ENCODE measurements at regions of chrX and their contacts with region 1.

Region 1: DNA sequence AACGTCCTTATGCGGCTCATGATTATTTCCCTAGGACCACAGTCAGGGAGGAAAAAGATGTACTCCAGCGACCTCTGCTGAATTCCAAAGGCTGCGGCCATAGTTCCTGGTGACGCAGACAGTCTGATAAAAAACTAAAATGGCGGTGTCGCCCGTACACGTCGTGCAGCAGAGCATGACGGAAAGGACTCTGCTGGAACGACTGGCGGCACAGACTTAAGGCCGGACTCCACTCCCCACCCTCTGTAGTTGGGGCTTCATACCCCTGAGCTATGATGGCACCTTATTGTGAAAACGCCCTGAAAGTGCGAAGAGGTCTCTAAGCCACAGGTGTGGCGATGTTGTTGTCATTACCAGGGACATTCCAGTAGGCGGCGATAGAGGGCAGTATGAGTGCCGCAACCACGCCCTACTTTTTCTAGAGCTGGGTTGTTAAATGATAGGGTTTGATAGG is 90.0 kb upstream of the EDA2R start:
- DNase-seq: peak; percentile 69
- H3K4me3 Mint-ChIP-seq: peak overlapping the region; percentile 84
- H3K27ac Mint-ChIP-seq: peak overlapping the region; percentile 89
- H3K4me1 Mint-ChIP-seq: no peaks in the 10 kb centered on the region
- H3K27me3 Mint-ChIP-seq: no peaks in the 10 kb centered on the region
- CTCF ChIP-seq: peak; percentile 47

Region 2: GRCh38 chrX:65581661-65582339 is 1147.0 kb before region 1 on chrX:
- CTCF ChIA-PET with region 1: interaction called, 33 read pairs
- POLR2A ChIA-PET with region 1: no interaction called
- intact Hi-C with region 1: loop called (anchors 1 kb)
- DNase-seq: peak; percentile 72
- H3K4me3 Mint-ChIP-seq: no peak overlapping the region
- H3K27ac Mint-ChIP-seq: no peak overlapping the region
- H3K4me1 Mint-ChIP-seq: peaks cover 5% of the 10 kb centered on the region
- H3K27me3 Mint-ChIP-seq: no peaks in the 10 kb centered on the region
- CTCF ChIP-seq: peak; percentile 60

Region 3: GRCh38 chrX:65985922-65986588 is 742.8 kb before region 1 on chrX:
- CTCF ChIA-PET with region 1: interaction called, 4 read pairs
- POLR2A ChIA-PET with region 1: no interaction called
- intact Hi-C with region 1: loop called (anchors 5 kb)
- DNase-seq: peak; percentile 70
- H3K4me3 Mint-ChIP-seq: no peak overlapping the region
- H3K27ac Mint-ChIP-seq: no peak overlapping the region
- H3K4me1 Mint-ChIP-seq: peaks cover 6% of the 10 kb centered on the region
- H3K27me3 Mint-ChIP-seq: no peaks in the 10 kb centered on the region
- CTCF ChIP-seq: peak; percentile 44

Region 4: DNA sequence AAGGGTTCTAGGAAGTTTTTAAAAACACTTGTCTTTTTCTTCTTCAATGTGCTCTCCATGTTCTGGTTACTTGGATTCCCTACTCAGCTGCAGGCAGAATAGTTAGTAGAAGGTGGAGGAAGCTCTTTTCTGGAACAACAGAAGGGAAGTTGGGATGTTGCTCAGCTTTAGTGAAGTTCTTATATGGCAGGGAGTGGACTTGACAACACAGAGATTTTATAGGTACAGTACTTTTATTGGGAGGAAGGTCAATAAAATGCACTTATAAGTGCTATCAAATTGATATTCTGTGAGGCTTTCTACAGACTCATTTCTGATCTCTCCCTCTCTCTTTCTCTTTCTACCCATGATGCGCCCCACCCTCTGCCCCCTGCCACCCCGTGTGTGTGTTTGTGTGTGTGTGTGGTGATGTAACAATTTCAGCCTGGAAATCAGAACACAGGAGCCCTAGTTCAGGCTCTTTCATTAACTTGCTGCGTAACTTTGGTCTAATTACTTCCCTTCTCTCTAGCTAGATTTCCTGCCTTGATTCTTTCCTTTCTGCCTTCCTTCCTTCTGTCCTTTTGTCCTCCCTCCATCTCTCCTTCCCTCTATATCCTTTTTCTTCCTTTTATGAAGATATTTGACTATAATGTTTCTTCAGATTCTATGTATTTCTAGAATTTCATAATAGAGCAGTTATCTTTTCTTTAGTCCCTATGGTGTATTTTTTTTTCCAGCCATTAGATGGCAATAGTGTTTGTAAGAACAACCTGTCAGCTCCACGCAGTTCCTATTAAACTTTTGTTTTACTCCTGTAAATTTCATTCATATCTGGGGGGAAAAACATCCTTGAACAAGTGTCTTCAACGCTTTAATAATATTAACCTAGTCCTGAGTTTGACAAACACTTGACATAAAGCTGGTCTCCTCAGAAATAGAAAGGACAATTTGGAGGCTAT is 527.7 kb before region 1 on chrX:
- CTCF ChIA-PET with region 1: interaction called, 143 read pairs
- POLR2A ChIA-PET with region 1: interaction called, 3 read pairs
- intact Hi-C with region 1: loop called (anchors 1 kb)
- DNase-seq: peak; percentile 18
- H3K4me3 Mint-ChIP-seq: no peak overlapping the region
- H3K27ac Mint-ChIP-seq: no peak overlapping the region
- H3K4me1 Mint-ChIP-seq: no peaks in the 10 kb centered on the region
- H3K27me3 Mint-ChIP-seq: no peaks in the 10 kb centered on the region
- CTCF ChIP-seq: peak; percentile 34

Region 5: DNA sequence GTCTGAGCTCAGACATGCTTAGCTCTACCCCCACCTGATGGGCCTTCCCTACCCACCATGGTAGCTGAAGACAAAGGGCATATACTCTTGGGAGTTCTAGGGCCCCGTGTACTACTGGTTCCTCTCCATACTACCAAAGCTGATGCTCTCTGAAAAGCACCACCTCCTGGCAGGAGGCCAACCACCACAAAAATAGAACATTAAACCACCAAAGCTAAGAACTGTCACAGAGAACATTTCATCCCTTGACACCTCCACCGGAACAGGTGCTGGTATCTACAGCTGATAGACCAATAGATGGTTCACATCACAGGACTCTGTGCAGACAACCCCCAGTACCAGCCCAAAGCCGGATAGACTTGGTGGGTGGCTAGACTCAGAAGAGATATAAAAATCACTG is 103.3 kb before region 1 on chrX:
- CTCF ChIA-PET with region 1: no interaction called
- POLR2A ChIA-PET with region 1: no interaction called
- intact Hi-C with region 1: no loop called
- DNase-seq: no peak
- H3K4me3 Mint-ChIP-seq: no peak overlapping the region
- H3K27ac Mint-ChIP-seq: no peak overlapping the region
- H3K4me1 Mint-ChIP-seq: peaks cover 31% of the 10 kb centered on the region
- H3K27me3 Mint-ChIP-seq: no peaks in the 10 kb centered on the region
- CTCF ChIP-seq: no peak

Region 6: DNA sequence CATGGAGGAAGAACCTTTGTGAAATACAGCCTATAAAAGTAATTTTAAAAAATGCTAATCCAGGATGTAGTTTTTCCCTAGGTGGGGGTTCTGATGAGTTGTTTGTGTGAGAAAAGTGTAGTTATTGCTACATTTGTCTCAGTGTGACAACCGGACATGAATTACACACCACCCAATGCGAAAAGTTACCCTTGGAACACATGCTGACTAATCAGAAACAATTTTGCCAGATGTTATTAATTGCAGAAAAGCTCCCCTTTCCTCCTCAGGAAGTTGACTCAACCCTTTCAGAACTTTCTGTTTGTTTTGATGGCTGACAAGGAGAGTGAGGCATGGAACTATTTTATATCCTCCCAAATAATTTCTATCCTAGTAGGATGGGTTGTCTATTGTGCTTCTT is 51.9 kb before region 1 on chrX:
- CTCF ChIA-PET with region 1: interaction called, 9 read pairs
- POLR2A ChIA-PET with region 1: no interaction called
- intact Hi-C with region 1: loop called (anchors 2 kb)
- DNase-seq: peak; percentile 82
- H3K4me3 Mint-ChIP-seq: peak overlapping the region; percentile 19
- H3K27ac Mint-ChIP-seq: peak overlapping the region; percentile 60
- H3K4me1 Mint-ChIP-seq: peaks cover 16% of the 10 kb centered on the region
- H3K27me3 Mint-ChIP-seq: no peaks in the 10 kb centered on the region
- CTCF ChIP-seq: no peak

Region 7: GRCh38 chrX:66931713-66932112 is 202.9 kb after region 1 on chrX:
- CTCF ChIA-PET with region 1: no interaction called
- POLR2A ChIA-PET with region 1: no interaction called
- intact Hi-C with region 1: no loop called
- DNase-seq: no peak
- H3K4me3 Mint-ChIP-seq: no peak overlapping the region
- H3K27ac Mint-ChIP-seq: no peak overlapping the region
- H3K4me1 Mint-ChIP-seq: no peaks in the 10 kb centered on the region
- H3K27me3 Mint-ChIP-seq: no peaks in the 10 kb centered on the region
- CTCF ChIP-seq: no peak

Region 8: GRCh38 chrX:66988331-66988730 is 259.5 kb after region 1 on chrX:
- CTCF ChIA-PET with region 1: no interaction called
- POLR2A ChIA-PET with region 1: no interaction called
- intact Hi-C with region 1: no loop called
- DNase-seq: no peak
- H3K4me3 Mint-ChIP-seq: no peak overlapping the region
- H3K27ac Mint-ChIP-seq: no peak overlapping the region
- H3K4me1 Mint-ChIP-seq: no peaks in the 10 kb centered on the region
- H3K27me3 Mint-ChIP-seq: no peaks in the 10 kb centered on the region
- CTCF ChIP-seq: no peak

Region 9: GRCh38 chrX:67004451-67004850 is 275.6 kb after region 1 on chrX:
- CTCF ChIA-PET with region 1: no interaction called
- POLR2A ChIA-PET with region 1: no interaction called
- intact Hi-C with region 1: no loop called
- DNase-seq: no peak
- H3K4me3 Mint-ChIP-seq: no peak overlapping the region
- H3K27ac Mint-ChIP-seq: no peak overlapping the region
- H3K4me1 Mint-ChIP-seq: no peaks in the 10 kb centered on the region
- H3K27me3 Mint-ChIP-seq: no peaks in the 10 kb centered on the region
- CTCF ChIP-seq: no peak

Region 10: GRCh38 chrX:68146054-68146453 is 1417.2 kb after region 1 on chrX:
- CTCF ChIA-PET with region 1: interaction called, 8 read pairs
- POLR2A ChIA-PET with region 1: no interaction called
- intact Hi-C with region 1: loop called (anchors 5 kb)
- DNase-seq: peak; percentile 40
- H3K4me3 Mint-ChIP-seq: no peak overlapping the region
- H3K27ac Mint-ChIP-seq: no peak overlapping the region
- H3K4me1 Mint-ChIP-seq: no peaks in the 10 kb centered on the region
- H3K27me3 Mint-ChIP-seq: peaks cover 29% of the 10 kb centered on the region
- CTCF ChIP-seq: peak; percentile 65